Vagina (tissue), 2 donors: ENCODE measurements at regions of chr3 and their contacts with region 1.

Region 1: GRCh38 chr3:42486814-42487565 is 15.5 kb upstream of the VIPR1 start:
- DNase-seq: peak in 1 of 2 donors; percentile 90
- H3K4me3 ChIP-seq: no peak overlapping the region
- H3K27ac ChIP-seq: no peak overlapping the region
- H3K4me1 ChIP-seq: peaks cover 11% of the 10 kb centered on the region
- H3K27me3 ChIP-seq: no peaks in the 10 kb centered on the region
- CTCF ChIP-seq: no peak
- POLR2A ChIP-seq: no peak

Region 2: DNA sequence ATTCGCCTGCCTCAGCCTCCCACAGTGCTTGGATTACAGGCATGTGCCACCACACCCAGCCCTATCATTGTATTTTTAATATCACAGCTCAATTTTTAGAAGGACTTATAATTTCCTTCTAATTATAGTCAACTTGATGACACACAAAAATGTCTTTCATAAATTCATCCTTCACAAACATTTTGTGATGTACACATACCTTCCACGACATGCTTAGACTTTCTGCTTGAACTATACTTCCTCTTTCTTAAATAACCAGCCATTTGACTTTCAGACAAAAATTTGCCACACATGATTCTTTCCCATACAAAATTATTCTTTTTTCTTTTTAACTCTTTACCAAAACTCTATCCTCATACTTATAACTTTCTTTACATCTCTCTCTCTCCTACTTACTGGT is 172.6 kb before region 1 on chr3:
- intact Hi-C with region 1: no loop called
- DNase-seq: no peak
- H3K4me3 ChIP-seq: no peak overlapping the region
- H3K27ac ChIP-seq: no peak overlapping the region
- H3K4me1 ChIP-seq: no peaks in the 10 kb centered on the region
- H3K27me3 ChIP-seq: no peaks in the 10 kb centered on the region
- CTCF ChIP-seq: no peak
- POLR2A ChIP-seq: no peak

Region 3: GRCh38 chr3:42473083-42473932 is 13.7 kb before region 1 on chr3:
- intact Hi-C with region 1: loop called (anchors 1 kb)
- DNase-seq: no peak
- H3K4me3 ChIP-seq: no peak overlapping the region
- H3K27ac ChIP-seq: no peak overlapping the region
- H3K4me1 ChIP-seq: peaks cover 26% of the 10 kb centered on the region
- H3K27me3 ChIP-seq: no peaks in the 10 kb centered on the region
- CTCF ChIP-seq: no peak
- POLR2A ChIP-seq: no peak